Activated T-helper 2 cell treated with anti-CD3 and anti-CD28 coated beads, Interferon-gamma antibody, Interleukin-2, Interleukin-4, amounts not matched to agents 10 μg/mL and 5 μg/mL and 100 μg/mL, durations not matched to agents 14 hours and 24 hours and 36 hours (primary cell): ENCODE measurements at regions of chr12 and their contacts with region 1.

Region 1: DNA sequence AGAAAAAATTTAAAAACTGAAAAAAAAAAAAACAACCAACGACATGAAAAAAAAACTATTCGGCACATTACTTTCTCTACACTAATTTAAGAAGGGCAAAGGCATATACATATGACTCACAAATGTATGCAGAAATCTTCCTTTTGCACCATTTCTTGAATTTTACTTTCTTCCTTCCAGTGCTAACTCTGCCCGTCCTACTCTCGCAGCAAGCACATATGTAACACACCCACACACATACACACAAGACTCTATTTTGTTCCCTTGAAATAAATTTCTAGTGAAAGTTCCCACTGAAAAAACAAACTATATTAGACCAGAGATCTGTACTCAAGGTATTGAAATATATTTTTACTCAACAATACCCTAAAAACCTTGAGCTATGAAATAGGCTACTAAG is 14.6 kb downstream of the BTG1 start:
- DNase-seq: no peak
- H3K4me3 Mint-ChIP-seq: peak overlapping the region; percentile 72
- H3K27ac Mint-ChIP-seq: peak overlapping the region; percentile 77
- H3K4me1 Mint-ChIP-seq: peaks cover 64% of the 10 kb centered on the region
- H3K27me3 Mint-ChIP-seq: no peaks in the 10 kb centered on the region

Region 2: GRCh38 chr12:91902860-91903683 is 227.9 kb before region 1 on chr12:
- intact Hi-C with region 1: no loop called
- DNase-seq: no peak
- H3K4me3 Mint-ChIP-seq: no peak overlapping the region
- H3K27ac Mint-ChIP-seq: no peak overlapping the region
- H3K4me1 Mint-ChIP-seq: peaks cover 8% of the 10 kb centered on the region
- H3K27me3 Mint-ChIP-seq: no peaks in the 10 kb centered on the region

Region 3: DNA sequence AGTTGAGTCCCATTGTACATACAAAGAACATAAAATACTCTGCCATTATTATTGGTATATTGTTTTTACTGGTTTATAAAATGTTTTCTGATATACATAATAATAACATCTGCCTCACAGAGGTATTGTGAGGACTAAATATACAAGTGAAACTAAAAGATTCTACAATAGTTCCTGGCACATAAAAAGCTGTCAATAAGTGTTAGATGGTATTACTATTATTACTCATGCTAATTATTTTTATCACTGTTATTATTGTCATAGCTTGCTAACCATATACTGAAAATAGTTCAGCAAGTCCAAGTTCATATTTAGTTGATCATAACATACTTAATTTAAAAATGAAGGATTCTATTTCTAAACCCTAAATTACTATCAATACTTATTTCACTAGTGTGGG is 19.7 kb before region 1 on chr12:
- intact Hi-C with region 1: loop called (anchors 2 kb)
- DNase-seq: no peak
- H3K4me3 Mint-ChIP-seq: peak overlapping the region; percentile 3
- H3K27ac Mint-ChIP-seq: no peak overlapping the region
- H3K4me1 Mint-ChIP-seq: peaks cover 50% of the 10 kb centered on the region
- H3K27me3 Mint-ChIP-seq: no peaks in the 10 kb centered on the region

Region 4: DNA sequence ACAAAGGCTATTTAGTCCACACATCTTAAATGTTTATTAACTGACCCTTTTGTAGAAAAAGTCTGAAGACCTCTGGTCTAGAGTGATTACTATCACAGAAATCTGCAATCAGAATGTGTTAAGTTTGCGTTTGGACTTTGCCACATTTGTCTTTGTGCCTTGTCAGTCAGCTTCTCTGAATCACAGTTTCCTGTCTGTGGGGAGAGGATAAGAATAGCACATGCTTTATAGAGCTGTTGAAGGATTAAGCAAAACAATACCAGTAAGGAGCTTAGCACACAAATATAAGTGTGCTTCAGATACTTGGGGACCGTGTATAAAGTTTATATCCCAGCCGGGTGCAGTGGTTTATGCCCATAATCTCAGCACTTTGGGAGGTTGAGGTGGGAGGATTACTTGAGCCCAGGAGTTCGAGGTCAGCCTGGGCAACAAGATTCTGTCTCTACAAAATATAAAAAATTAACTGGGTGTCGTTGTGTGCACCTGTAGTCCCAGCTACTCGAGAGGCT is 77.7 kb after region 1 on chr12:
- intact Hi-C with region 1: no loop called
- DNase-seq: peak; percentile 19
- H3K4me3 Mint-ChIP-seq: peak overlapping the region; percentile 22
- H3K27ac Mint-ChIP-seq: peak overlapping the region; percentile 24
- H3K4me1 Mint-ChIP-seq: peaks cover 37% of the 10 kb centered on the region
- H3K27me3 Mint-ChIP-seq: no peaks in the 10 kb centered on the region

Region 5: DNA sequence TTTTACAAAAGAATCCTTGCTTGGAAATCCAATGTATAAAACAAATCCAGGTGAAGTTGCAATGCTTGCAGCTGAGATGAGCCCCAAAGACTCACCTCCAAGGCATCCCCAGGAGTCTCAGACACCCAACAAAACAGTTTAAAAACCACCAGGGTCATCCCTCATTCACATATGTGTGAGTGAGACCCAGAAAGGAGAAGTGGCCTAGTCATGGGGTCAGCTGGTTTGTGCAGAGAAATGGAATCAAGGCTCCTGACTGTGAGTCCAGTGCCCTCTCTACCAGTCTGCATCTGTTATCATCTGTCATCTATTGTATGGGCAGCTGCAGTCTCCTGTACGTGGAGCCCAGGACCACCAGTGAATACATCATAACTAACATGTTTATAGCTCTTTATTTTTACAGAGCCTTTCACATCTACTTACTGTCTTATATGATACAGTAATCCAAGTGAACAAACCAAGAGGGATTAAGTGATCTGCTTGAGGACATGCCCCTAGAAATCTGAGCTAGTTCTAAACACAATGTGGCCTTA is 598.8 kb after region 1 on chr12:
- intact Hi-C with region 1: no loop called
- DNase-seq: no peak
- H3K4me3 Mint-ChIP-seq: no peak overlapping the region
- H3K27ac Mint-ChIP-seq: no peak overlapping the region
- H3K4me1 Mint-ChIP-seq: no peaks in the 10 kb centered on the region
- H3K27me3 Mint-ChIP-seq: no peaks in the 10 kb centered on the region